CD4-positive, alpha-beta T cell (primary cell): ENCODE measurements at regions of chr12 and their contacts with region 1.

Region 1: GRCh38 chr12:14769969-14770495 is 33.2 kb downstream of the WBP11 start:
- DNase-seq: peak; percentile 72 to 96 (median 83)
- ATAC-seq: peak; percentile 50
- H3K4me3 ChIP-seq: peak overlapping the region; percentile 71
- H3K4me3 Mint-ChIP-seq: peak overlapping the region; percentile 97
- H3K27ac ChIP-seq: peak overlapping the region; percentile 95 to 99
- H3K27ac Mint-ChIP-seq: peak overlapping the region; percentile 100
- H3K4me1 ChIP-seq: peaks cover 40% of the 10 kb centered on the region
- H3K4me1 Mint-ChIP-seq: peaks cover 79% of the 10 kb centered on the region
- H3K27me3 ChIP-seq: no peaks in the 10 kb centered on the region
- H3K27me3 Mint-ChIP-seq: no peaks in the 10 kb centered on the region
- CTCF ChIP-seq: peak; percentile 81

Region 2: GRCh38 chr12:14239350-14239934 is 530.6 kb before region 1 on chr12:
- CTCF ChIA-PET with region 1: no interaction called
- POLR2A ChIA-PET with region 1: interaction called, 7 read pairs
- intact Hi-C with region 1: loop called in 1 of 2 experiments (anchors 5 kb)
- DNase-seq: peak in 5 of 14 experiments; percentile 8 to 66 (median 54)
- ATAC-seq: peak; percentile 62
- H3K4me3 ChIP-seq: peak overlapping the region; percentile 49
- H3K4me3 Mint-ChIP-seq: peak overlapping the region; percentile 88
- H3K27ac ChIP-seq: peak overlapping the region in 1 of 2 donors; percentile 18
- H3K27ac Mint-ChIP-seq: peak overlapping the region; percentile 87
- H3K4me1 ChIP-seq: peaks cover 19% of the 10 kb centered on the region
- H3K4me1 Mint-ChIP-seq: peaks cover 20% of the 10 kb centered on the region
- H3K27me3 ChIP-seq: no peaks in the 10 kb centered on the region
- H3K27me3 Mint-ChIP-seq: no peaks in the 10 kb centered on the region
- CTCF ChIP-seq: no peak

Region 3: DNA sequence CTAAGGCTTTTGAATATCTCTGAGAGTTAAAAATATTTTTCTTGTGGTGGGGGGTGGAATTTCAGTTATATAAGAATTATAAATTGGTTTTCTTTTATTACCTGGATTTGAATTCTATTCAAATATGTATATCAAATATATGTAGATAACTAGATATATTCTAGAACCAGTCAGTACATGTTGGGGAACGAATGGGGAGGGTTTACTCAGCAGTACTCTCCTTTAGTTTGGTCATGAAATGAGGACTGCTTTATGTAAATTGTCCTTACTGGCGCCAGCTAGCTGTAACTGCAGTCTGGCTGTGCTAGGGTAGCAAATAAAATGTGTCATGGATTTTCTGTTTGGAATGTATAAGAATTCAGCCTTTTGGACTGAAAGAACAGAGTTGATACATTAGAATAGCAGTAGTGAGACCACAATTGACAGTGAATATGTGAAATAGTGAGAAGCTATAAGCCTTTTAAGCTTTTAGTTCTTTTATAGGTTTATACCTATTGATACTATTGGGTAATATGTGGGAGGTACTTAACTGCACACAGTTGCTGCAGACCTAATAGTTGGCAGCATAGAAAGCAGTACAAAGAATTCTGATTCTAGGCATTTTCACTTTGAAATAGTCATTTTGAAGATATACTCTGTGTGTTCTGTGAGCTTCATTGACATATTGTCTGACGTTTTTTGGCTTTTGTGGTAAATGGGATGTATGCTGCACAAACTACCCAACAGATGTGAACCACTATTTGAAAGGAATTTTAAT is 375.5 kb before region 1 on chr12:
- CTCF ChIA-PET with region 1: no interaction called
- POLR2A ChIA-PET with region 1: interaction called, 16 read pairs
- intact Hi-C with region 1: no loop called
- DNase-seq: peak in 7 of 14 experiments; percentile 15 to 86 (median 36)
- ATAC-seq: peak; percentile 70
- H3K4me3 ChIP-seq: peak overlapping the region; percentile 10
- H3K4me3 Mint-ChIP-seq: peak overlapping the region; percentile 83
- H3K27ac ChIP-seq: peak overlapping the region; percentile 58 to 66
- H3K27ac Mint-ChIP-seq: peak overlapping the region; percentile 91
- H3K4me1 ChIP-seq: peaks cover 25% of the 10 kb centered on the region
- H3K4me1 Mint-ChIP-seq: peaks cover 90% of the 10 kb centered on the region
- H3K27me3 ChIP-seq: no peaks in the 10 kb centered on the region
- H3K27me3 Mint-ChIP-seq: no peaks in the 10 kb centered on the region
- CTCF ChIP-seq: no peak

Region 4: GRCh38 chr12:14723763-14724162 is 46.3 kb before region 1 on chr12:
- CTCF ChIA-PET with region 1: interaction called, 3 read pairs
- POLR2A ChIA-PET with region 1: interaction called, 13 read pairs
- intact Hi-C with region 1: loop called in 1 of 2 experiments (anchors 5 kb)
- DNase-seq: peak; percentile 21 to 80 (median 46)
- ATAC-seq: peak; percentile 76
- H3K4me3 ChIP-seq: no peak overlapping the region
- H3K4me3 Mint-ChIP-seq: no peak overlapping the region
- H3K27ac ChIP-seq: no peak overlapping the region
- H3K27ac Mint-ChIP-seq: no peak overlapping the region
- H3K4me1 ChIP-seq: no peaks in the 10 kb centered on the region
- H3K4me1 Mint-ChIP-seq: peaks cover 5% of the 10 kb centered on the region
- H3K27me3 ChIP-seq: no peaks in the 10 kb centered on the region
- H3K27me3 Mint-ChIP-seq: peaks cover 11% of the 10 kb centered on the region
- CTCF ChIP-seq: peak; percentile 81

Region 5: GRCh38 chr12:14803011-14803829 is 33.2 kb after region 1 on chr12 and contains the starts of genes C12orf60 and WBP11:
- CTCF ChIA-PET with region 1: interaction called, 12 read pairs
- POLR2A ChIA-PET with region 1: interaction called, 375 read pairs
- intact Hi-C with region 1: loop called (anchors 1 to 5 kb)
- DNase-seq: peak; percentile 73 to 98 (median 80)
- ATAC-seq: peak; percentile 95
- H3K4me3 ChIP-seq: peak within 1 kb of the TSS; percentile 89
- H3K4me3 Mint-ChIP-seq: no peak within 1 kb of the TSS
- H3K27ac ChIP-seq: peak within 1 kb of the TSS; percentile 88 to 96
- H3K27ac Mint-ChIP-seq: no peak within 1 kb of the TSS
- H3K4me1 ChIP-seq: peaks cover 7% of the 10 kb centered on the region
- H3K4me1 Mint-ChIP-seq: peaks cover 18% of the 10 kb centered on the region
- H3K27me3 ChIP-seq: no peaks in the 10 kb centered on the region
- H3K27me3 Mint-ChIP-seq: no peaks in the 10 kb centered on the region
- CTCF ChIP-seq: no peak
- total RNA-seq, gene C12orf60: 0.11 to 0.22 TPM
- total RNA-seq, gene WBP11: 169 to 188 TPM

Region 6: DNA sequence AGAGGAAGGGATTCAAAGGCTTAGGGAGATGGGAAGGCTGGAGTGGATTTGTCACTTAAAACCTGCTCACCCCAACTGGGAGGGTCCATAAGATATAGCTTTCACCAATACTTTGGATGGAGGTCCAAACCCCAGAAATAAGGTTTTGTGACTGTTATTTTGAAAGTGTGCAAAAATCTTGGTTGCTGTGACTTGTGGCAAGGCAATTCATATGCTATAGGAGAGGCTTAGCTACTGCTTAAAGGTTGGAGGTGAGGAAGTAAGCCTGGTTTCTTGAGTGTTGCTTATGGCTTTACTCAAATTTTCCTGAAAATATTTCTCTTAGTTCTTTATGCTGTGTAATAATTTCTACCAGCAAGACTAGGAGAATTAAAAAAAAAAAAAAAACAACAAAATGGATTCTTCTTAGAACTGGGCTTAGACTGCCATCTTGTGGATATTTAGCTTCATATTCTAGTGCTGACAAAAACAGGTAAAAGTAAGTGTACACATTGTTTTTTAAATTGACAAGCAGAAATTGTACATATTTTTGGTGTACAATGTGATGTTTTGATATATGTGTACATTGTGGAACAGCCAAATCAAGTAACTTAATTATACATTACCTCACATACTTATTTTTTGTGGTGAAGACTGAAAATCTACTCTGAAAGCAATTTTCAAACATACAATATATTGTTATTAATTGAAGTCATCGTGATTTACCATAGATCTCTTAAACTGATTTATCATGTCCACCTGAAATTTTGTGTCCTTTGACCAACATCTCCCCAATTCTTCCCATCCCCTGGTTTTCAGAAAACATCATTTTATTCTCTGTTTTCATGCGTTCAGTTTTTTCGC is 225.8 kb after region 1 on chr12:
- CTCF ChIA-PET with region 1: interaction called, 8 read pairs
- POLR2A ChIA-PET with region 1: interaction called, 22 read pairs
- intact Hi-C with region 1: loop called in 1 of 2 experiments (anchors 5 kb)
- DNase-seq: peak in 3 of 14 experiments; percentile 72 to 83 (median 83)
- ATAC-seq: peak; percentile 72
- H3K4me3 ChIP-seq: no peak overlapping the region
- H3K4me3 Mint-ChIP-seq: peak overlapping the region; percentile 60
- H3K27ac ChIP-seq: no peak overlapping the region
- H3K27ac Mint-ChIP-seq: peak overlapping the region; percentile 82
- H3K4me1 ChIP-seq: peaks cover 24% of the 10 kb centered on the region
- H3K4me1 Mint-ChIP-seq: peaks cover 36% of the 10 kb centered on the region
- H3K27me3 ChIP-seq: no peaks in the 10 kb centered on the region
- H3K27me3 Mint-ChIP-seq: no peaks in the 10 kb centered on the region
- CTCF ChIP-seq: peak; percentile 76